Transverse colon (tissue), 4 donors: ENCODE measurements at regions of chr3 and their contacts with region 1.

Region 1: GRCh38 chr3:177231242-177231641 is 34.0 kb upstream of the TBL1XR1 start:
- DNase-seq: no peak
- H3K4me3 ChIP-seq: no peak overlapping the region
- H3K27ac ChIP-seq: no peak overlapping the region
- H3K4me1 ChIP-seq: no peaks in the 10 kb centered on the region
- H3K27me3 ChIP-seq: no peaks in the 10 kb centered on the region
- CTCF ChIP-seq: no peak
- EP300 ChIP-seq: no peak
- POLR2A ChIP-seq: no peak

Region 2: GRCh38 chr3:177126015-177126773 is 105.0 kb before region 1 on chr3:
- in situ Hi-C with region 1: no loop called
- intact Hi-C with region 1: no loop called
- DNase-seq: no peak
- H3K4me3 ChIP-seq: no peak overlapping the region
- H3K27ac ChIP-seq: peak overlapping the region; percentile 20 to 61 (median 52)
- H3K4me1 ChIP-seq: peaks cover 26 to 75% (median 45%) of the 10 kb centered on the region in 4 donors
- H3K27me3 ChIP-seq: no peaks in the 10 kb centered on the region
- CTCF ChIP-seq: no peak
- EP300 ChIP-seq: no peak
- POLR2A ChIP-seq: no peak

Region 3: DNA sequence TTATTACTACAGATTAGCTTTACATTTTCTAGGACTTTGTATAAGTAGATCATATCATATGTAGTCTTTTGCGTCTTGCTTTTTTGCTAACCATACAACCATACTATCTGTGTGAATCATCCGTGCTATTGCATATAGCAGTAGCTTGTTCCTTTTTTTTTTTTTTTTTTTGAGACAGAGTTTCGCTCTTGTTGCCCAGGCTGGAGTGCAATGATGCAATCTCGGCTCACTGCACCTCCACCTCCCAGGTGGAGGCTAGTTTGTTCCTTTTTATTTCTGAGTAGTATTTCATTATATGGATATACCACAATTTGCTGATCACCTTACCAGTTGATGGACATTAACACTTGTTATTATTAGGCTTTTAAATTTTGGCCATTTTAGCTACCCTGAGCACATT is 20.5 kb after region 1 on chr3:
- in situ Hi-C with region 1: no loop called
- intact Hi-C with region 1: loop called (anchors 1 kb)
- DNase-seq: no peak
- H3K4me3 ChIP-seq: no peak overlapping the region
- H3K27ac ChIP-seq: no peak overlapping the region
- H3K4me1 ChIP-seq: peaks cover 0 to 15% (median 1%) of the 10 kb centered on the region in 4 donors
- H3K27me3 ChIP-seq: no peaks in the 10 kb centered on the region
- CTCF ChIP-seq: no peak
- EP300 ChIP-seq: no peak
- POLR2A ChIP-seq: no peak